SK-N-SH (cell line): ENCODE measurements at regions of chr11 and their contacts with region 1.

Region 1: GRCh38 chr11:125091247-125091876 is 20.1 kb downstream of the TMEM218 start:
- DNase-seq: peak; percentile 90
- H3K4me3 ChIP-seq: no peak overlapping the region; a peak in 1 of 4 replicates
- H3K27ac ChIP-seq: peak overlapping the region in 1 of 2 experiments; percentile 17; a peak in 1 of 4 replicates
- H3K4me1 ChIP-seq: peaks cover 4% of the 10 kb centered on the region in 2 experiments; a peak in 2 of 4 replicates
- H3K27me3 ChIP-seq: no peaks in the 10 kb centered on the region
- CTCF ChIP-seq: peak; percentile 79
- EP300 ChIP-seq: no peak
- RAD21 ChIP-seq: peak; percentile 96

Region 2: DNA sequence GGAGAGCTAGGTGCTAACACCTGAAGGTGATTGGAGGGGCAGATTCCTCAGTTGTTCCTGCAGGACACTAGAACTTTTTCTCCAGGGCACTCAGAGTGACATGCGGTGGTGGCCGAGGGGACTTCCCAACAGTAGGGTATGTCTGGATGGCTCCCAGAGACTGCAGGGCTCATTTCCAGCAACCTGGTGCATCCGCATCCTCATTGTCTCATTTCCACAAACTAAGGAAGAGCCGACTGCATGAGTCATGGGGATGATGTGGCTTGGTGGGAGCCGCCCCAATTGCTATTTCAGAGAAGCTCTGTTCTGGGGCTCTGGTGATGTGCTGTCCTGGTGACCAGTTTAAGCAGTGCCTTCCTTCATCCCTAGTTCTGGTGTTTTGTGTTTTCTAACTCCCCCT is 190.9 kb before region 1 on chr11:
- CTCF ChIA-PET with region 1: no interaction called
- POLR2A ChIA-PET with region 1: no interaction called
- DNase-seq: peak; percentile 5
- H3K4me3 ChIP-seq: peak overlapping the region in 1 of 2 experiments; percentile 41; a peak in 2 of 4 replicates
- H3K27ac ChIP-seq: peak overlapping the region; percentile 67 to 96; a peak in 3 of 4 replicates
- H3K4me1 ChIP-seq: peaks cover 4 to 34% of the 10 kb centered on the region in 2 experiments; a peak in 3 of 4 replicates
- H3K27me3 ChIP-seq: no peaks in the 10 kb centered on the region
- CTCF ChIP-seq: no peak
- EP300 ChIP-seq: peak in 1 of 2 experiments; percentile 74; a peak in 1 of 4 replicates
- RAD21 ChIP-seq: no peak

Region 3: GRCh38 chr11:125075849-125076317 is 15.5 kb before region 1 on chr11:
- CTCF ChIA-PET with region 1: interaction called, 22 read pairs
- POLR2A ChIA-PET with region 1: no interaction called
- DNase-seq: no peak
- H3K4me3 ChIP-seq: no peak overlapping the region
- H3K27ac ChIP-seq: no peak overlapping the region
- H3K4me1 ChIP-seq: no peaks in the 10 kb centered on the region; a peak in 1 of 4 replicates
- H3K27me3 ChIP-seq: no peaks in the 10 kb centered on the region
- CTCF ChIP-seq: no peak
- EP300 ChIP-seq: no peak
- RAD21 ChIP-seq: no peak

Region 4: DNA sequence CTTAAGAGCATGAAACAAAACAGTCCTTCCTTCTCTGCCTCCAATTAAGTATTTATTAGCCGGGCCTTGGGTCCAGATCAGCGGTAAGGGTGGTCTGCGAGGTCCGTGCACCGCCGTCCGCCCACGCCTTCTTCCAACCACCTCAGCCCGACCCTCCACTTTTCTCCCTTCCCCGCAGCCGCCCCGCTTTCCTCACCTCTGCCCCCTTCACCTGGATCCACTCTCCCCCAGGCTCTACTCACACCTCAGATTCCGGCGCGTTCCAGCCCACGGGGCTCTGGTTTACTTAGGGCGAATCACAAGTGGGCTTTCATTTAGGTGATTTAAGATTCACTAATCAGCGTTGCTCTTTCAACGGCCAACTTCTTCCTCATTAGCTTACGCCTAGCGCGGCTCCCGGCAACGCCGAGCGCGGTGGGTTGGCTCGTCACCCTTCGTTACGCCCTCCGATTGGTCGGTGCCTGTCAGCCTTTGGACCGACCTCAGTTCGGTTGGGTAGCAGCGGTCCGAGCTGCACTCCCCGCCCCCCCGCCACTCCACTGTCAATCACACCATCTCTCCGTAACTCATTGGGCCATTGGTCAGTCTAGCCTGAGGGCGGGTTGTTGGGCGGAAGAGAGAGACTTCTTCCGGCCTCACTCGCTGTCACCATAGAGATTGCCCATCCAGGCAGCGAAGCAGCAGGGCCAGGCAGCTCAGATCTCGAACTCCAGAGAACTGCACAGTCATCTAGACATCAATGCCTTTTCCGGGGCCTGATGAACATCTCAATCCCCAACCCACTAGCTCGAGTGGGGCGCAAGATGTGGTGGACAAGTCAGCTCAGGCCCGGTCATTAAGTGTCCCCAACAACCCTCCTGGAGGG is 20.2 kb after region 1 on chr11 and contains the start of gene TMEM218:
- CTCF ChIA-PET with region 1: interaction called, 21 read pairs
- POLR2A ChIA-PET with region 1: no interaction called
- DNase-seq: peak; percentile 93
- H3K4me3 ChIP-seq: peak within 1 kb of the TSS; percentile 79 to 100
- H3K27ac ChIP-seq: peak within 1 kb of the TSS; percentile 46 to 84; a peak in 3 of 4 replicates
- H3K4me1 ChIP-seq: peaks cover 5 to 8% of the 10 kb centered on the region in 2 experiments; a peak in 3 of 4 replicates
- H3K27me3 ChIP-seq: no peaks in the 10 kb centered on the region
- CTCF ChIP-seq: no peak
- EP300 ChIP-seq: no peak
- RAD21 ChIP-seq: no peak
- polyA plus RNA-seq, gene TMEM218: 34.8 and 36.2 TPM in 2 replicates

Region 5: DNA sequence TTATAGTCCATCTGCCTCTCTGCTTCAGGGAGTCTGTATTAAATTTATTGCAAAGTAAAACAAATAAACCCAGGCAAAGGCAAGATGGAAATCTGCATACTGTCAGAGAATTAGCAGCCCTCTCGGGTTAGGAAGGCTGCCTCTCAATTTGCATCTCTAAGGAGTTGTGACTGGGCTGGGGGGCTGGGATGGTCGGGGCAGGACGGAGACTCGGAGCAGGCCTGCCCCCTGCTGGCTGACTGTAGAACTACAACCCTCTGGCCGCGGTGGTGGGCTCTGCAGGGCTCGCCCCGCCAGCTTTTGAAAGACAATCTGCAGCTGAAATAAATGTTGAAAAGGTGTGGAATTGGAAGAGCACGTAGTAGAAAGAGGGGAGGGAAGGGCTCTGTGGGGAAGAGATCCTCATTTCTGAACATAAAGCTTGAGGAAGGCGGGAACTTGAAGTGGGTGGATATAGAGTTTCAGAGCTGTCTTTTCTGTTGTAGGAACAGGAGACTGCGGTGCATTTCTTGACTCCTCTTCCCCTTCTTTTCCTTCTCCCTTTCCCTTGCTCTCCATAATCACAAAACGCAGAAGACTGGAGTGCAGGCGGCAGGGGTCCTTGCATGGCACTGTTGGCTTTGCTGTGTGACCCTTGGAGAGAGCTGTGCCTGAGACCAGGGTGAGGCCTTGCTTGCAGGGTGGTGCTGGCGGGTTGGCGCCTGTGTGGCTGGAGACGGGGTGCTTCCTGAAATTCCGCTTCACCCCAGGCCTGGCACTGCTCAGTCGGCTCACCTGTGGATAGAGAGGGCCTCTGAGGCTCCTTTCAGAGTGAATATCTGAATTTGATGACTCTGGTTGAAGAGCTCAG is 50.5 kb after region 1 on chr11:
- CTCF ChIA-PET with region 1: interaction called, 147 read pairs
- POLR2A ChIA-PET with region 1: interaction called, 6 read pairs
- DNase-seq: peak; percentile 87
- H3K4me3 ChIP-seq: no peak overlapping the region; a peak in 1 of 4 replicates
- H3K27ac ChIP-seq: no peak overlapping the region
- H3K4me1 ChIP-seq: peaks cover 0 to 13% of the 10 kb centered on the region in 2 experiments; a peak in 1 of 4 replicates
- H3K27me3 ChIP-seq: no peaks in the 10 kb centered on the region
- CTCF ChIP-seq: peak; percentile 97
- EP300 ChIP-seq: no peak
- RAD21 ChIP-seq: peak; percentile 78

Region 6: GRCh38 chr11:125201525-125202141 is 110.3 kb after region 1 on chr11:
- CTCF ChIA-PET with region 1: no interaction called
- POLR2A ChIA-PET with region 1: no interaction called
- DNase-seq: no peak
- H3K4me3 ChIP-seq: no peak overlapping the region
- H3K27ac ChIP-seq: no peak overlapping the region
- H3K4me1 ChIP-seq: peaks cover 0 to 2% of the 10 kb centered on the region in 2 experiments; a peak in 1 of 4 replicates
- H3K27me3 ChIP-seq: no peaks in the 10 kb centered on the region
- CTCF ChIP-seq: no peak
- EP300 ChIP-seq: no peak
- RAD21 ChIP-seq: no peak

Region 7: GRCh38 chr11:125235071-125235471 is 143.7 kb after region 1 on chr11:
- CTCF ChIA-PET with region 1: no interaction called
- POLR2A ChIA-PET with region 1: no interaction called
- DNase-seq: peak; percentile 33
- H3K4me3 ChIP-seq: no peak overlapping the region
- H3K27ac ChIP-seq: no peak overlapping the region
- H3K4me1 ChIP-seq: no peaks in the 10 kb centered on the region; a peak in 1 of 4 replicates
- H3K27me3 ChIP-seq: no peaks in the 10 kb centered on the region
- CTCF ChIP-seq: no peak
- EP300 ChIP-seq: no peak
- RAD21 ChIP-seq: no peak

Region 8: GRCh38 chr11:125351033-125351867 is 259.9 kb after region 1 on chr11:
- CTCF ChIA-PET with region 1: interaction called, 90 read pairs
- POLR2A ChIA-PET with region 1: interaction called, 3 read pairs
- DNase-seq: no peak
- H3K4me3 ChIP-seq: no peak overlapping the region
- H3K27ac ChIP-seq: no peak overlapping the region
- H3K4me1 ChIP-seq: no peaks in the 10 kb centered on the region
- H3K27me3 ChIP-seq: no peaks in the 10 kb centered on the region
- CTCF ChIP-seq: no peak
- EP300 ChIP-seq: no peak
- RAD21 ChIP-seq: no peak

Region 9: DNA sequence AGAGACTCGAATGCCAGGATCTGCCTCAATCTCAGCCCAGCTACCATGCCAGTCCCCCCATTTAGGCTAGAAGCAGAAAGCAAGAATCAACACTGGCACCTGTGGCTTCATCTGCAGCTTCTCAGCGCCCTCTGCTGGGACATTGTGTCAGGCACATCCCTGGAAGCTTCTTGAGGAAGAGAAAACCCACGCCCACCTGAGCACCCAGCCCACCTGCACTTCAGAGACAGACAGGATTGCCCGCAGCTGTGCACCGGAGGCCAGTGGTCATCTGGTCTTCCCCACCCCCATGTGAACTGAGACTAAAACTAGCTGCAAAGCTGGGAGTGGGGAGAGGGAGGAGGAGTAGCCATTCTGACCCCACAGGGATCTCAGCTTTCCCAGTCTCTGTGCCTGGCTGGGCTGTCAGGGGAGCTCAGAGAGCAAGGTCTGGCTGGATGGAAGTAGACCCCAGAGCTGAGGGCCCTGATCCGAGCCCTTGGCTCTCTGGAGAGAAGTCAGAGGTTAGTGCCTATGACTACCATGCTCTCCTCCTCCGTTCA is 337.9 kb after region 1 on chr11:
- CTCF ChIA-PET with region 1: interaction called, 49 read pairs
- POLR2A ChIA-PET with region 1: no interaction called
- DNase-seq: peak; percentile 74
- H3K4me3 ChIP-seq: no peak overlapping the region; a peak in 1 of 4 replicates
- H3K27ac ChIP-seq: no peak overlapping the region
- H3K4me1 ChIP-seq: peaks cover 0 to 4% of the 10 kb centered on the region in 2 experiments; a peak in 1 of 4 replicates
- H3K27me3 ChIP-seq: peaks cover 6% of the 10 kb centered on the region; the same call in 1 of the 2 replicates
- CTCF ChIP-seq: peak; percentile 71
- EP300 ChIP-seq: no peak
- RAD21 ChIP-seq: peak; percentile 78